ENCODE measurements at regions of chr13 and their contacts with region 1.

Region 1: DNA sequence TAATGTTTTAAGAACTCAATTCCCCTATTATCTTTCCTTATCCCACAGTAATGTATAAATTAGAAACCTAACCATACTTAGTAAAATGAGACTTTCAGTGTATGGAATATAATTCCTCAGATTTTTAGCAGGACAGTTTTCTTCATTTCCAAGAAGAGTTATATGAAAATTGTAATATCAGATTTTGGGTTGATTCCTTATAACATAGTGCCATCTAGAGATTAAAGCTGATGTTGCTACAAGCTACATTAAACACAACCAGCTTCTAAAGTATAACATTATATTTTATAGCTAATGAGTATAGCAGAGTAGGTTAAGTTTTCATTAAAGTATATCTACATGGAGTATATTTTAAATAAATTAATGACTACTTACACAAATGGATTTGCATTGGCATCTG is 99.7 kb upstream of the MIR17HG start:
- DNase-seq: no peak

Region 2: DNA sequence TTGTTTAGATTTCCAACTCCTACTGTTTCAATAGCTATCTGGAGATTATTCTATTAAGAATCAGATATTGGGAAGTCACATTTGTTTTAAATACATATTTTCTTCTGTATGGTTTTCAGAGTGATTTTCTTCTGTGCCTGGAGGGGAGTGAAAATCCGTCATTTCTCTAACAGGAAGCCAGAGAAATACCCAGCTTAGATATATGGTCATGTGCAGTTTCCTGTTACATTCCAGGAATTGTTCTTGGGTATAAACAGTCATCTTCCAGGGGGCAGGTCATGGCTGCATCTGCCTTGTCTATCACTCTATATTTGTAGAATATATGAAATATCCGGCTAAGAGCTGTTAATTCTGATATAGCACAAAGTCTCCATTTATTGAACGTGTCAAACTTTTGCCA is 22.3 kb after region 1 on chr13:
- intact Hi-C with region 1: loop called in 1 of 2 experiments (anchors 2 kb)
- DNase-seq: no peak

Measured in posterior vena cava (tissue), 2 donors.